Naive thymus-derived CD4-positive, alpha-beta T cell (primary cell): ENCODE measurements at regions of chr7 and their contacts with region 1.

Region 1: GRCh38 chr7:148884299-148885022 is 370 bp upstream of the EZH2 start:
- DNase-seq: peak; percentile 89 to 96 (median 94)
- ATAC-seq: peak; percentile 94
- H3K4me3 ChIP-seq: peak overlapping the region; percentile 57
- H3K4me3 Mint-ChIP-seq: peak overlapping the region; percentile 85 to 98 (median 94)
- H3K27ac ChIP-seq: peak overlapping the region; percentile 97
- H3K27ac Mint-ChIP-seq: peak overlapping the region; percentile 89 to 98 (median 93)
- H3K4me1 ChIP-seq: peaks cover 6 to 7% of the 10 kb centered on the region in 2 donors
- H3K4me1 Mint-ChIP-seq: peaks cover 0 to 45% (median 29%) of the 10 kb centered on the region in 7 donors
- H3K27me3 ChIP-seq: no peaks in the 10 kb centered on the region
- H3K27me3 Mint-ChIP-seq: no peaks in the 10 kb centered on the region

Region 2: GRCh38 chr7:148849393-148850098 is 34.9 kb before region 1 on chr7:
- CTCF ChIA-PET with region 1: no interaction called
- POLR2A ChIA-PET with region 1: interaction called, 4 read pairs
- intact Hi-C with region 1: loop called in 1 of 2 experiments (anchors 5 kb)
- DNase-seq: no peak
- ATAC-seq: no peak
- H3K4me3 ChIP-seq: no peak overlapping the region
- H3K4me3 Mint-ChIP-seq: no peak overlapping the region
- H3K27ac ChIP-seq: no peak overlapping the region
- H3K27ac Mint-ChIP-seq: no peak overlapping the region
- H3K4me1 ChIP-seq: peaks cover 4 to 8% of the 10 kb centered on the region in 2 donors
- H3K4me1 Mint-ChIP-seq: peaks cover 17 to 65% (median 42%) of the 10 kb centered on the region in 7 donors
- H3K27me3 ChIP-seq: no peaks in the 10 kb centered on the region
- H3K27me3 Mint-ChIP-seq: no peaks in the 10 kb centered on the region

Region 3: DNA sequence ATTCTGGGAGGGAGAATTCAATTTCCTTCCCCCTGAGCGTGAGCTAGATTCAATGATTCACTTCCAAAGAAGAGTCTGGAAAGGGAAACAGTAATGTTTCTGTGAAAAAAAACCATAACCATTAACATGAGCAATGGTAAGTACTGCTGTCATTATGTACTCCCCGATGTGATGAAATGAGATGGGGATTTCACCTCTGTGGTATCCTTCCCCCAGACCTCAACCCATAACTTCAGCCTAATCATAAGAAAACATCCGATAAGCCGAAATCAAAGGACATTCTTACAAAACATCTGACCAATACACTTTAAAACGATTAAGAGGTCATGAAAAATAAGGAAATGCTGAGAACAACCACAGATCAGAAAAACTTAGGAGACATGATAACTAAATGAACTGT is 27.6 kb before region 1 on chr7:
- CTCF ChIA-PET with region 1: interaction called, 6 read pairs
- POLR2A ChIA-PET with region 1: interaction called, 4 read pairs
- intact Hi-C with region 1: loop called (anchors 1 kb)
- DNase-seq: no peak
- ATAC-seq: peak; percentile 57
- H3K4me3 ChIP-seq: no peak overlapping the region
- H3K4me3 Mint-ChIP-seq: peak overlapping the region in 1 of 10 donors; percentile 60
- H3K27ac ChIP-seq: no peak overlapping the region
- H3K27ac Mint-ChIP-seq: peak overlapping the region in 1 of 9 donors; percentile 63
- H3K4me1 ChIP-seq: peaks cover 3 to 5% of the 10 kb centered on the region in 2 donors
- H3K4me1 Mint-ChIP-seq: peaks cover 8 to 45% (median 15%) of the 10 kb centered on the region in 7 donors
- H3K27me3 ChIP-seq: no peaks in the 10 kb centered on the region
- H3K27me3 Mint-ChIP-seq: no peaks in the 10 kb centered on the region

Region 4: GRCh38 chr7:148867596-148868377 is 16.7 kb before region 1 on chr7:
- CTCF ChIA-PET with region 1: no interaction called
- POLR2A ChIA-PET with region 1: interaction called, 7 read pairs
- intact Hi-C with region 1: loop called (anchors 1 to 2 kb)
- DNase-seq: no peak
- ATAC-seq: no peak
- H3K4me3 ChIP-seq: no peak overlapping the region
- H3K4me3 Mint-ChIP-seq: no peak overlapping the region
- H3K27ac ChIP-seq: no peak overlapping the region
- H3K27ac Mint-ChIP-seq: peak overlapping the region in 1 of 9 donors; percentile 16
- H3K4me1 ChIP-seq: peaks cover 0 to 4% of the 10 kb centered on the region in 2 donors
- H3K4me1 Mint-ChIP-seq: peaks cover 11 to 60% (median 23%) of the 10 kb centered on the region in 7 donors
- H3K27me3 ChIP-seq: no peaks in the 10 kb centered on the region
- H3K27me3 Mint-ChIP-seq: no peaks in the 10 kb centered on the region

Region 5: GRCh38 chr7:148914208-148914777 is 29.8 kb after region 1 on chr7:
- CTCF ChIA-PET with region 1: no interaction called
- POLR2A ChIA-PET with region 1: interaction called, 3 read pairs
- intact Hi-C with region 1: loop called (anchors 1 kb)
- DNase-seq: peak in 2 of 9 donors; percentile 17 to 77
- ATAC-seq: no peak
- H3K4me3 ChIP-seq: no peak overlapping the region
- H3K4me3 Mint-ChIP-seq: peak overlapping the region; percentile 34 to 84 (median 74)
- H3K27ac ChIP-seq: peak overlapping the region; percentile 60
- H3K27ac Mint-ChIP-seq: peak overlapping the region in 8 of 9 donors; percentile 62 to 89 (median 81)
- H3K4me1 ChIP-seq: peaks cover 39 to 45% of the 10 kb centered on the region in 2 donors
- H3K4me1 Mint-ChIP-seq: peaks cover 44 to 73% (median 63%) of the 10 kb centered on the region in 7 donors
- H3K27me3 ChIP-seq: no peaks in the 10 kb centered on the region
- H3K27me3 Mint-ChIP-seq: no peaks in the 10 kb centered on the region

Region 6: GRCh38 chr7:148940702-148941597 is 56.5 kb after region 1 on chr7:
- CTCF ChIA-PET with region 1: interaction called, 4 read pairs
- POLR2A ChIA-PET with region 1: interaction called, 27 read pairs
- intact Hi-C with region 1: loop called (anchors 1 kb)
- DNase-seq: peak; percentile 45 to 86 (median 76)
- ATAC-seq: peak; percentile 88
- H3K4me3 ChIP-seq: peak overlapping the region; percentile 95
- H3K4me3 Mint-ChIP-seq: peak overlapping the region; percentile 86 to 99 (median 96)
- H3K27ac ChIP-seq: peak overlapping the region; percentile 88
- H3K27ac Mint-ChIP-seq: peak overlapping the region; percentile 94 to 99 (median 98)
- H3K4me1 ChIP-seq: peaks cover 7 to 12% of the 10 kb centered on the region in 2 donors
- H3K4me1 Mint-ChIP-seq: peaks cover 8 to 25% (median 20%) of the 10 kb centered on the region in 7 donors
- H3K27me3 ChIP-seq: no peaks in the 10 kb centered on the region
- H3K27me3 Mint-ChIP-seq: no peaks in the 10 kb centered on the region